HCT116 (cell line): ENCODE measurements at regions of chr9 and their contacts with region 1.

Region 1: DNA sequence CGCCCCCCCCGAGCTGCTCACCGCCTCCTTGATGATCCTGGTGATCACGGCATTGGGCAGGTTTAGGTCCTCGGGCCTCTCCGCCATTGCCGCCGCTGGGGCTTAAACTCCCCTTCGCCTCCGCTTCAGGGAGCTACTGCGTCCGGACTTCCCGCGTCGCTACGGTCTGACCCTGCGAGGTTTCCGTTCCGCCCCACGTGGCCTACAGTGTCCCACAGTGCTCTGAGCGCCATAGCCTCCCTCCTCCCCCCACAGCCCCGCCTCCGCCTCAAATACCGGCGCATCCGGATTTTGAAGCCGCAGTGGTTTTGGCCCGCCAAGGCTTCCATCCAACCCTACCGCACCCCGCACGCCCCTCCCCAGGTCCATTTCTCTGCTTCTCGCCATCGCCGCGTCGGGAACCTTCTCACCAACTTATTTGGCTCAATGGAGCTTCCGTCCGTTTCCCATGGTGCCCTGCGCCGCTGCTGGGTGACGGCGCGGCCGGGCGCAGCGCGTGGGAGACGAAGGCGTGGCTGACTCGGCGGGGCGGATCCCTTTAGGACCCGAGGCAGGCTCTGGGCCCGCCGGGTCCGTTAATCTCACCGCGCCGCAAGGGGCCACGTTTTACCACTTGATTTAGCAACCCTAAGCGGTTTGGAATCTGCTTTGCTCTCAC is at the starts of genes C9orf43 and POLE3:
- DNase-seq: peak; percentile 92
- ATAC-seq: peak; percentile 91
- H3K4me3 ChIP-seq: peak within 1 kb of the TSS; percentile 95 to 98
- H3K27ac ChIP-seq: peak within 1 kb of the TSS; percentile 89
- H3K4me1 ChIP-seq: peaks cover 6 to 17% of the 10 kb centered on the region in 2 experiments
- H3K27me3 ChIP-seq: no peaks in the 10 kb centered on the region
- CTCF ChIP-seq: no peak
- POLR2A ChIP-seq: peak; percentile 88
- RAD21 ChIP-seq: no peak
- total RNA-seq, gene C9orf43: 0.71 TPM
- total RNA-seq, gene POLE3: 65.1 TPM

Region 2: DNA sequence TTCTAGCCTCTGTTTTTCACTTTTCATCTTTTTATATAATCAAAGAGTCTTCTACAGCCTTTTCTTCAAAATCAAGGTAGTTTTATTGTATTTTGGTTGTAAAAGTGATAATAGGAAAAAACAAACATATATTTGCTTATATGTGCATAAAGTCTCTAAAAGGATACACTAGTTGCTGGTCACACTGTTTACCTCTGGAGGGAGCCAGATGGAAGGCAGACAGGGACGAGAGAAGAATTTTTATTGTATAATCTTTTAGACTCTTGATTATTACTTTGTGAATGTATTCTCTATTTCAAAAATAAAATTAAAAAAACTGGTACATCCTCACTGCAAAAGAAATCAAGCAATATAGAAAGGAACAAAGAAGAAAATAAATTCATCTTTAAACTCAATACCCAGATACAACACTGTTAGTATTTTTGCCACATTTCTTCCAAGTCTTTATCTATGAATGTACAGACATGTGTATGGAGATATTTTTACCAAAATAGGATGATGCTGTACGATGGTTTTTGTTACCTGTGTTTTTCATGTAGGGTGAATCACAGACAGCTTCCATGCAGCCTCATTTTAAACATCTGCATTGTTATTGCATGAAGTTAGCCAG is 101.0 kb before region 1 on chr9:
- CTCF ChIA-PET with region 1: no interaction called
- POLR2A ChIA-PET with region 1: interaction called, 3 read pairs
- RAD21 ChIA-PET with region 1: no interaction called
- intact Hi-C with region 1: loop called (anchors 1 kb)
- DNase-seq: peak; percentile 8
- ATAC-seq: peak; percentile 76
- H3K4me3 ChIP-seq: no peak overlapping the region
- H3K27ac ChIP-seq: no peak overlapping the region
- H3K4me1 ChIP-seq: no peaks in the 10 kb centered on the region
- H3K27me3 ChIP-seq: no peaks in the 10 kb centered on the region
- CTCF ChIP-seq: peak; percentile 74 to 86 (median 78)
- POLR2A ChIP-seq: no peak
- RAD21 ChIP-seq: peak; percentile 93

Region 3: DNA sequence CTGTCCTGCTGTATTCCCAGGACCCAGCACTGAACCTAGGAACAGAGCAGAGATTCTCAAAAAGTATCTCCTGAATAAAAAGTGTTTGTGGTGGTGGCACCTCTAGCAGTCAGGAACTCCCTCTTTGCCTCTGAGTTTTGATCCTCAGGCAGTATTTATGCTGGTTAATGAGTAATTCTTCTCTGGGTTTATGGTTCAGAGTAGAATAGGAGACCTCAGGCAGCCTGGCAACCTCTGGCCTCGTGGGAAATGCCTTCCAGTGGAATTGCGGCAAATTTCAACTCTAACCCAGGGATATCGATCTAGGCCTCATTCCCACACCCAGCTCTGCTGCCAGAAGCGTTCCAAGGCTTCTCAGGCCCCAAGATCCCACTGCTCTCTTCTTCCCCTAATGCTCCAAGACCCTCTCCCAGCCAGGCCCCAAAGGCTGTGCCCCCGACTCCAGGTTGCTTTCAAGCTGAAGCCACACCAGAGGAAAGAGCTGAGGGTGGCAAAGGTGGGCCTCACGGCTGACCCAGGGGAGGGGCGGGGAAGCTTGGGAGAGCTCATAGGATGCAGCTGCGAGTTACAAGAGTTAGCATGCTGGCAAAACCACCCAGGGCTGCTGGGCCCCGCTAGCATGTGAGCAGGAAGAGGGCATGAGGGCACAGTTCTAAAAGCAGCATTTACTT is 22.6 kb before region 1 on chr9:
- CTCF ChIA-PET with region 1: no interaction called
- POLR2A ChIA-PET with region 1: no interaction called
- RAD21 ChIA-PET with region 1: no interaction called
- intact Hi-C with region 1: no loop called
- DNase-seq: no peak
- ATAC-seq: no peak
- H3K4me3 ChIP-seq: no peak overlapping the region
- H3K27ac ChIP-seq: no peak overlapping the region
- H3K4me1 ChIP-seq: peaks cover 0 to under 1% of the 10 kb centered on the region in 2 experiments; a peak in 1 of 4 replicates
- H3K27me3 ChIP-seq: no peaks in the 10 kb centered on the region
- CTCF ChIP-seq: no peak
- POLR2A ChIP-seq: no peak
- RAD21 ChIP-seq: no peak